Activated naive CD4-positive, alpha-beta T cell treated with anti-CD3 and anti-CD28 coated beads for 36 hours (primary cell): ENCODE measurements at regions of chr6 and their contacts with region 1.

Region 1: GRCh38 chr6:138817822-138818308 is 22.0 kb downstream of the ECT2L start:
- DNase-seq: peak; percentile 8
- H3K4me3 Mint-ChIP-seq: no peak overlapping the region
- H3K27ac Mint-ChIP-seq: no peak overlapping the region
- H3K4me1 Mint-ChIP-seq: peaks cover 20% of the 10 kb centered on the region
- H3K27me3 Mint-ChIP-seq: no peaks in the 10 kb centered on the region

Region 2: DNA sequence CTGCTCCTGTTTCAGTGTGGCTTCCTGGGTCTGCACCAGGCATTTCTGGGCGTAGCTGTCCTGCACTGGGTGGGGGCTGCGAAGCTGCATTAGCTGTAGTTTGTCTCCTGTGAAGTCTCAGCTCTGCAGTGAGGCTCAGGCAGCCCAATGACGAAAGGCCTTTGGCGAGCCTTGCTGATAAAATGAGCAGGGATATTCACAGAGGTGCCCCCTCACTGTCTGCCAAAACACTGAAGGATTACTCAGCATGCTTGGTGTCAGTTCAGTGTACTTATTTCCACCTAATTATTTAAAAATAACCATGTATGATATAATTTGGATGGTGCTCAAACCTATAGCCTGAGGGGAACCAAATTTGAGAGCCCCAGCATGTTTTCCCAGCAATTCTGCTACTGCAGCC is 51.5 kb after region 1 on chr6:
- CTCF ChIA-PET with region 1: interaction called, 3 read pairs
- intact Hi-C with region 1: loop called (anchors 1 kb)
- DNase-seq: no peak
- H3K4me3 Mint-ChIP-seq: no peak overlapping the region
- H3K27ac Mint-ChIP-seq: no peak overlapping the region
- H3K4me1 Mint-ChIP-seq: peaks cover 14% of the 10 kb centered on the region
- H3K27me3 Mint-ChIP-seq: peaks cover 2% of the 10 kb centered on the region

Region 3: DNA sequence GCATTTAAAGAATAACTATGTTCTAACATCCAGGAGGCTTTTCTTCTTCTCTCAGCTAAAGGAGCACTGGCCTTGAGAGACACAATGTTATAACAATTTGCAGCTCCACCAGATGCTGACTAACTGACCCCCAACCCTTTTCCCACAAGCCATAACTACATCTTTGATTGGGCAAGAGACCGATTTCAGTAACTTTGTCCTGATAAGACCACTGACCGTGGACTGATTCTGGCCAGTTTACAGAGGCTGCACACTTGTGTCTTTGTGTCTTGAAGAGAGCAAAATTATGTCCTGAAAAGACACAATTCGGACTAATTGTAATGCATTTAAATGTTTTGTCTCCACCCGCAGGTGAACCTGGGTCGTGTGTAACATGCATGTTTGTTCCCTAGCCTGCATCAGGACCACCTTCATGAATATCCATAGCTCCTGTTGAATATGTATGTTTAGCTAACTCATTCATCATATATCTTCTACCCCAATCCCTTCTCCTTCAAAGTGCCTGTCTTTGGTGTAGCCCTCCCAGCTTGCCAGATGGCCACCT is 233.0 kb after region 1 on chr6:
- CTCF ChIA-PET with region 1: interaction called, 4 read pairs
- intact Hi-C with region 1: loop called (anchors 1 kb)
- DNase-seq: no peak
- H3K4me3 Mint-ChIP-seq: no peak overlapping the region
- H3K27ac Mint-ChIP-seq: no peak overlapping the region
- H3K4me1 Mint-ChIP-seq: peaks cover 7% of the 10 kb centered on the region
- H3K27me3 Mint-ChIP-seq: no peaks in the 10 kb centered on the region

Region 4: GRCh38 chr6:139117734-139118133 is 299.9 kb after region 1 on chr6:
- CTCF ChIA-PET with region 1: interaction called, 3 read pairs
- intact Hi-C with region 1: loop called (anchors 2 kb)
- DNase-seq: no peak
- H3K4me3 Mint-ChIP-seq: no peak overlapping the region
- H3K27ac Mint-ChIP-seq: peak overlapping the region; percentile 25
- H3K4me1 Mint-ChIP-seq: peaks cover 48% of the 10 kb centered on the region
- H3K27me3 Mint-ChIP-seq: no peaks in the 10 kb centered on the region

Region 5: GRCh38 chr6:139364302-139364981 is 546.6 kb after region 1 on chr6:
- CTCF ChIA-PET with region 1: interaction called, 7 read pairs
- intact Hi-C with region 1: loop called (anchors 1 kb)
- DNase-seq: no peak
- H3K4me3 Mint-ChIP-seq: no peak overlapping the region
- H3K27ac Mint-ChIP-seq: no peak overlapping the region
- H3K4me1 Mint-ChIP-seq: peaks cover 26% of the 10 kb centered on the region
- H3K27me3 Mint-ChIP-seq: no peaks in the 10 kb centered on the region